ENCODE measurements at regions of chr1 and their contacts with region 1.

Region 1: DNA sequence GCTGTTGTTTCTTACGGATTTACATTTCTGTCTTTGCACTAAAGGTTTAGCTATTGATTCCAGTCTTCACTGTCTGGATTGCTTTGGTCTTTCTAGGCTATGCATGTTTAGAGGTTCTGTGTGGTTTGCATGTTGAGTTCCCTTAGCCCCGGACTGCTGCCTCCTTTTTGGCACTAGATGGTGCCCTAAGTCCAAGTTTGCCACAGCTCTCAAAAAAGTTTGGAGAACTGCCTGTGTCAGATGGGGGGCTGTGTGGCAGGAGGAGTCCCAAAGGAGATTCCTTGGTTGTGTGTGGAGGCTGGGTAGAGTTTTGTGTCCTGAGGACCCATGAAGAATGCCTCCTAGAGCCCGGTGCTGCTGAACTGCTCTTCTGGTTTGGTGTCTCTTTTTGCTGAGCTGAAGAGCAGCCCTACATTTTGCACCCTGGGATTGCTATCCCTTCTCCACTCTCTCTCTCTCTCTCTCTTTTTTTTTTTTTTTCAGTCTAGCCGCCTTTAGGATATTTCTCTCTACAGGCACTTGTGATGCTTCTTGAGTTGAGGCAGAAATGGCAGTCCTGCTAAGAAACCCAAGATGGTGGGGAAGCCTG is 74.4 kb downstream of the PTGS2 start:
- DNase-seq: peak; percentile 80
- H3K4me3 Mint-ChIP-seq: no peak overlapping the region
- H3K27ac Mint-ChIP-seq: no peak overlapping the region
- H3K4me1 Mint-ChIP-seq: no peaks in the 10 kb centered on the region
- H3K27me3 Mint-ChIP-seq: peaks cover 44% of the 10 kb centered on the region

Region 2: GRCh38 chr1:186102557-186103148 is 503.2 kb before region 1 on chr1:
- intact Hi-C with region 1: no loop called
- DNase-seq: no peak
- H3K4me3 Mint-ChIP-seq: no peak overlapping the region
- H3K27ac Mint-ChIP-seq: no peak overlapping the region
- H3K4me1 Mint-ChIP-seq: no peaks in the 10 kb centered on the region
- H3K27me3 Mint-ChIP-seq: peaks cover 4% of the 10 kb centered on the region

Region 3: GRCh38 chr1:186404454-186405051 is 201.3 kb before region 1 on chr1:
- intact Hi-C with region 1: loop called (anchors 5 kb)
- DNase-seq: peak; percentile 74
- H3K4me3 Mint-ChIP-seq: no peak overlapping the region
- H3K27ac Mint-ChIP-seq: no peak overlapping the region
- H3K4me1 Mint-ChIP-seq: peaks cover 9% of the 10 kb centered on the region
- H3K27me3 Mint-ChIP-seq: no peaks in the 10 kb centered on the region

Region 4: DNA sequence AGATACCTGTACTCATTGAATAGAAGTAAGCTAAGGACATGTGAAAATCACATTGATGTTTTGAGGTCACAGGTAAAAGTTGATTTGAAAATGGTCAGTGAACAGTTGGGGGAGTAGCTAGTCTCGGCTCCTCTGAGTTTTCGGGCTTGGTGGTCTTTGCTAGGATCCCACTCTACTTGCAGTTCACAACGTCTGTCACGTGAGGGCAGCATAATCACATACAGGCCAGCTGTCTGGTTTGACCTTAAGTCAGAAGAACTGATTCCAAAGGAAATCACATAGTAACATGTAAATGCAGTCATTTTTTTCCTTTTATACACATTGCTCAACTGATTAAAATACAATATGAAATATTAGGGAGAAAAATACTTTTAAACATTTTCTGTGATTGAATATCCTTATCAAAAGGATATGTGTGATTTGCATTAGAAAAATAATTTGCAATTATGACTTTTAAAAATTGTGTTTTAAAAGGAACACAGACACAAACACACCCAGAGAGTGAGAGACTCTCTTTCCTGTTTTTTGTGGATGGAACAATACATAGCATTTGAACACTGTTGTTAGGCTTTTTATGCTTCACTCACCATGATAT is 123.1 kb before region 1 on chr1:
- intact Hi-C with region 1: loop called (anchors 10 kb)
- DNase-seq: peak; percentile 82
- H3K4me3 Mint-ChIP-seq: no peak overlapping the region
- H3K27ac Mint-ChIP-seq: no peak overlapping the region
- H3K4me1 Mint-ChIP-seq: no peaks in the 10 kb centered on the region
- H3K27me3 Mint-ChIP-seq: peaks cover 20% of the 10 kb centered on the region

Region 5: DNA sequence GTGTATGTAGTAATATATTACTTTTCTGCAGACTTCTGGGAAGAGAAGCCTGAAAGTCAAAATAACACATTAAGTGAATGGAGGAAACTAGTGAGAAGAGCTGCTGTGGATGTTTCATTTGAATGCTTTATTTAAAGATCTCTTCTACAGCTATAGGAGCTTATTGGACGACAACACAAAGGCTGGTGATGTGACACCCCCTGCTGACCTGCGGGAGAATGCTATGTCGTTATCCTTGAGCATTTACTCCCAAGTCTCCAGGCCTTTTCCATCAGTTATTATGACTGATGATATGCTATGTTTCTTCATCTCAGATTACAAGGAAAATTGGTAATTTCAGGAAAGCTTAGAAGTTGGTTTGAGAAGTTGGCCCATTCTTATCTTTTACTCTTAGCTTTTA is 200.6 kb after region 1 on chr1:
- intact Hi-C with region 1: loop called (anchors 5 kb)
- DNase-seq: no peak
- H3K4me3 Mint-ChIP-seq: no peak overlapping the region
- H3K27ac Mint-ChIP-seq: no peak overlapping the region
- H3K4me1 Mint-ChIP-seq: no peaks in the 10 kb centered on the region
- H3K27me3 Mint-ChIP-seq: peaks cover 5% of the 10 kb centered on the region

Region 6: GRCh38 chr1:186985889-186986491 is 380.1 kb after region 1 on chr1:
- intact Hi-C with region 1: loop called (anchors 1 kb)
- DNase-seq: peak; percentile 70
- H3K4me3 Mint-ChIP-seq: no peak overlapping the region
- H3K27ac Mint-ChIP-seq: no peak overlapping the region
- H3K4me1 Mint-ChIP-seq: no peaks in the 10 kb centered on the region
- H3K27me3 Mint-ChIP-seq: peaks cover 3% of the 10 kb centered on the region

Measured in activated CD4-positive, alpha-beta T cell treated with anti-CD3 and anti-CD28 coated beads, Interleukin-2, amount 10 ng/mL, durations not matched to agents 24 days and 14 days (primary cell).